Gastrocnemius medialis (tissue), 4 donors: ENCODE measurements at regions of chr12 and their contacts with region 1.

Region 1: DNA sequence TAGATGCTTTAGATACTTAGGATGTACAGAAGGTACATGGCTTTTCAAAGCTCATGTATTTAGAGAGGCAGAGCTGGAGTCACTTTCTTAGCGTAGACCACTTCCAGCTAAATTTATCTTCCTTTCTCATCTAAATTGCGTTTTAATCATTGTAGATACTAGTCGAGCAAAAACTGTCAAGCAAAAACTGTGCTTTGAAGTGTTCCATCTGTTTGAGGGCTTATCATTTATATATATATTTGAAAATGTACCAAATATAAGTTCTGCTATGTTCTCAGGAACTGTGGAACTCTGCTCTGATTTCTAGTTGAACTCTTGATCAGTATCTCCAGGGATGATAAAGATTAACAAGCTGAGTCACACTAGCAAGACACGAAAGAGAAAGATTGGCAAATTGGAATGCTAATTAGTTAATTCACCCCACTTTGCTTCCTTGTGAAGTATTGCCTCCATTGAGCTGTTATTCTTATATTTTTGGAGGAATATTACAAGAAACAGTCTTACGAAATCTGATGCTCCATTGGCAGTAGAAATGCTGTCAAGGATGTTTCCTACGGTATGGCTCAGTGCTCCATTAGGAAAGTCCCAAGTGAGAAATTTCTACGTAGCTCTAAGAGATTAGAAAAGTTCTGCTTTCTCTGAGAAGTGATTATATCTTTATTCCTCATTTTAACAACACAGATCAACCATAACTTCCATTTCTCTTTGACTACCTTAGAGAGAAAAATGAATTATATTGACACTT is 310.8 kb downstream of the AEBP2 start:
- DNase-seq: no peak
- ATAC-seq: no peak
- H3K4me3 ChIP-seq: no peak overlapping the region
- H3K27ac ChIP-seq: no peak overlapping the region
- H3K4me1 ChIP-seq: no peaks in the 10 kb centered on the region
- H3K27me3 ChIP-seq: no peaks in the 10 kb centered on the region
- CTCF ChIP-seq: no peak
- POLR2A ChIP-seq: no peak

Region 2: GRCh38 chr12:19712041-19712440 is 38.0 kb before region 1 on chr12:
- in situ Hi-C with region 1: no loop called
- intact Hi-C with region 1: no loop called
- DNase-seq: no peak
- ATAC-seq: no peak
- H3K4me3 ChIP-seq: no peak overlapping the region
- H3K27ac ChIP-seq: no peak overlapping the region
- H3K4me1 ChIP-seq: no peaks in the 10 kb centered on the region
- H3K27me3 ChIP-seq: no peaks in the 10 kb centered on the region
- CTCF ChIP-seq: no peak
- POLR2A ChIP-seq: no peak

Region 3: DNA sequence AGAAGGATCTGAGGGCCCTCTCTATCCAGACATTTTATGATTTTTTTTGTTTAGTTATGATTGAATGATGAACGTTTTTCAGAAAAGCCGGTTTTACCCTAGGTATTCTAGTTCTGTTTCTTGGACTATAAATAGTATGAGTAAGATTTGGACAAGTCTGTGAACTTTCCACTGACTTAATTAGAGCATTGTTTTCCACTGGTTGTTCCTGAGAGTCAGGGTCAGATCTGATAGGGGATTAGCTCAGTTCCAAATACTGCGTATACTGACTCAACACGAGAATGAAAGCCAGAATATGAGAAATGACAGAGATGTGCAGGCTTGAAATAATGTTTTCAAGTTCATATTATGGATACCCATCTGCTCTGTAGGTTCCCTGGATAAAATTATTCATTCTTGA is 50.8 kb after region 1 on chr12:
- in situ Hi-C with region 1: no loop called
- intact Hi-C with region 1: loop called (anchors 2 kb)
- DNase-seq: no peak
- ATAC-seq: no peak
- H3K4me3 ChIP-seq: no peak overlapping the region
- H3K27ac ChIP-seq: peak overlapping the region in 1 of 4 donors; percentile 9
- H3K4me1 ChIP-seq: no peaks in the 10 kb centered on the region
- H3K27me3 ChIP-seq: no peaks in the 10 kb centered on the region
- CTCF ChIP-seq: no peak
- POLR2A ChIP-seq: no peak